Heart left ventricle (tissue), 16 donors: ENCODE measurements at regions of chr6 and their contacts with region 1.

Region 1: GRCh38 chr6:41705996-41706835 is 29.2 kb downstream of the TFEB start:
- DNase-seq: peak; percentile 86 to 92 (median 87)
- ATAC-seq: peak; percentile 89 to 91 (median 90)
- H3K4me3 ChIP-seq: peak overlapping the region in 2 of 12 donors; percentile 23 to 44
- H3K27ac ChIP-seq: peak overlapping the region; percentile 64 to 92 (median 82)
- H3K4me1 ChIP-seq: peaks cover 10 to 89% (median 61%) of the 10 kb centered on the region in 12 donors
- H3K27me3 ChIP-seq: no peaks in the 10 kb centered on the region
- CTCF ChIP-seq: peak; percentile 54 to 84 (median 72)
- POLR2A ChIP-seq: peak in 1 of 2 donors; percentile 10

Region 2: GRCh38 chr6:41767156-41767833 is 61.1 kb after region 1 on chr6:
- intact Hi-C with region 1: loop called in 2 of 10 experiments (anchors 5 to 10 kb)
- DNase-seq: peak in 4 of 5 donors; percentile 71 to 78 (median 72)
- ATAC-seq: peak; percentile 78 to 92 (median 88)
- H3K4me3 ChIP-seq: no peak overlapping the region
- H3K27ac ChIP-seq: peak overlapping the region in 11 of 12 donors; percentile 32 to 79 (median 61)
- H3K4me1 ChIP-seq: peaks cover 0 to 28% (median 19%) of the 10 kb centered on the region in 12 donors
- H3K27me3 ChIP-seq: no peaks in the 10 kb centered on the region
- CTCF ChIP-seq: no peak
- POLR2A ChIP-seq: no peak

Region 3: DNA sequence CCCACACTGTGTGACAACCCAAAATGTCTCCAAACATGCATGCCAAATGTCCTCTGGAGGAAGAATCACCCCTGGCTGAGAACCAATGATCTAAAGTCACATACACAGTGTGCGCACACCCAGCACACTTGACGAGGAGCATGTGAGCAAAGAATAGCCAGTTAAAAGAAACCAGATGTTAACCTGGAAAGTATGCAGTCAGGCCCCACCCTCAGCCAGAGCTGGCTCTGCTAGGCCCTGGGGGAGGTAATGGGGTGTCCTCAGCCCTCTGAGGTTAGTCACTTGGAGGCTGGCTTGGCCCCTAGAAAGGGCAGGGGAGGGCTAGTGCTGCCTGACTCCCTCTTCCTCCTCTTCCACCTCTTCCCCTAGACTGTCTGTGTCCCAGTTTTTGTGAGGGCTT is 451.8 kb after region 1 on chr6:
- intact Hi-C with region 1: no loop called
- DNase-seq: peak in 1 of 5 donors; percentile 32
- ATAC-seq: peak; percentile 40 to 69 (median 57)
- H3K4me3 ChIP-seq: no peak overlapping the region
- H3K27ac ChIP-seq: no peak overlapping the region
- H3K4me1 ChIP-seq: peaks cover 0 to 4% (median 0%) of the 10 kb centered on the region in 12 donors
- H3K27me3 ChIP-seq: no peaks in the 10 kb centered on the region
- CTCF ChIP-seq: no peak
- POLR2A ChIP-seq: no peak